B cell (primary cell): ENCODE measurements at regions of chr17 and their contacts with region 1.

Region 1: DNA sequence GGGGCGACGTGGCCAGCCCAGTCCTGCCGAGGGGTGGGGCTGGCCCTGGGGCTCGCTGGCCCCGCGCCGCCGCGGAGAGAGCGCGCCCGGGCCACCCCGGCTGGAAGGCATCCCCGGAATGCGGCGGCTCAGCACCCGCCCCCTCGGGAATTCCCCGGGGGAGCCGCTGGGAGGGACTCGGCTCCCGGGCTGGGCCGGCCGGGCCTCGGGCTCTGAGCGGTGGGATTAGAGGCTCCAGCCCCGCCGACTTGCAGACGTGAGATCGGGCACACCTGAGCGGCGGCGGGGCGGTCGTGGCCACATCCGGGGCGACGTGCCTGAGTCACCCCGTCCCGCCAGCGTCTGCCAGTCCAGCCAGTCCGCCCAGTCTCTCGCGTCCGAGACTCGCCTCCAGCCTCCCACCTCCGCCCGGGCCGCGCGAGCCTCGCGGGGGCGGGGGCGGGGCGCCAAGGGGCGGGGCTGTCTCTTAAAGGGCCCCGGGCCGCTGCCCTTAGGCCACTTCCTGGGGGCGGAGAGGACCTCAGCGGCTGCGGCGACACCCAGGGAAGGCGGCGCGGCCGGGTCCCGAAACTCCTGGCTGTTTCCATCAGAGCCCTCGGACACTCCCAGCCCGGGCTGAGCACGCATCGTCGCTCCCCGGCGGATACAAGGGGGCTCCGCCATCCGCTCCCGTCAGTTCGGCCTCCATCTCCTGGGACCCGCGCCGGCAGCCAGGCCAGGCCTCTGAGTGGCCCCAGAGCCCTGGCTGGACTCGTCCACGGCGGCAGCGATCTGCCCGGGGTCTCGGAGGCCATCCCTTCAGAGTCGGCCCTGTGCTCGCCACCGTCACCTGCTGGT is at the start of gene KCTD11:
- DNase-seq: peak; percentile 78
- ATAC-seq: peak; percentile 67
- H3K4me3 ChIP-seq: peak within 1 kb of the TSS; percentile 35 to 92 (median 84)
- H3K4me3 Mint-ChIP-seq: peak within 1 kb of the TSS; percentile 94
- H3K27ac ChIP-seq: peak within 1 kb of the TSS; percentile 63 to 90
- H3K27ac Mint-ChIP-seq: peak within 1 kb of the TSS; percentile 91
- H3K4me1 ChIP-seq: peaks cover 14 to 41% of the 10 kb centered on the region in 2 donors
- H3K4me1 Mint-ChIP-seq: peaks cover 38% of the 10 kb centered on the region
- H3K27me3 ChIP-seq: no peaks in the 10 kb centered on the region
- H3K27me3 Mint-ChIP-seq: no peaks in the 10 kb centered on the region
- CTCF ChIP-seq: peak; percentile 50
- total RNA-seq, gene KCTD11: 13.4 and 15.4 TPM in 2 replicates

Region 2: GRCh38 chr17:7204828-7205461 is 146.9 kb before region 1 on chr17:
- CTCF ChIA-PET with region 1: no interaction called
- POLR2A ChIA-PET with region 1: no interaction called
- intact Hi-C with region 1: no loop called
- DNase-seq: peak; percentile 99
- ATAC-seq: peak; percentile 85
- H3K4me3 ChIP-seq: peak overlapping the region in 4 of 5 experiments; percentile 49 to 65 (median 55)
- H3K4me3 Mint-ChIP-seq: peak overlapping the region; percentile 82
- H3K27ac ChIP-seq: peak overlapping the region; percentile 86 to 93
- H3K27ac Mint-ChIP-seq: peak overlapping the region; percentile 91
- H3K4me1 ChIP-seq: peaks cover 17 to 25% of the 10 kb centered on the region in 2 donors
- H3K4me1 Mint-ChIP-seq: peaks cover 28% of the 10 kb centered on the region
- H3K27me3 ChIP-seq: no peaks in the 10 kb centered on the region
- H3K27me3 Mint-ChIP-seq: peaks cover under 1% of the 10 kb centered on the region
- CTCF ChIP-seq: no peak

Region 3: DNA sequence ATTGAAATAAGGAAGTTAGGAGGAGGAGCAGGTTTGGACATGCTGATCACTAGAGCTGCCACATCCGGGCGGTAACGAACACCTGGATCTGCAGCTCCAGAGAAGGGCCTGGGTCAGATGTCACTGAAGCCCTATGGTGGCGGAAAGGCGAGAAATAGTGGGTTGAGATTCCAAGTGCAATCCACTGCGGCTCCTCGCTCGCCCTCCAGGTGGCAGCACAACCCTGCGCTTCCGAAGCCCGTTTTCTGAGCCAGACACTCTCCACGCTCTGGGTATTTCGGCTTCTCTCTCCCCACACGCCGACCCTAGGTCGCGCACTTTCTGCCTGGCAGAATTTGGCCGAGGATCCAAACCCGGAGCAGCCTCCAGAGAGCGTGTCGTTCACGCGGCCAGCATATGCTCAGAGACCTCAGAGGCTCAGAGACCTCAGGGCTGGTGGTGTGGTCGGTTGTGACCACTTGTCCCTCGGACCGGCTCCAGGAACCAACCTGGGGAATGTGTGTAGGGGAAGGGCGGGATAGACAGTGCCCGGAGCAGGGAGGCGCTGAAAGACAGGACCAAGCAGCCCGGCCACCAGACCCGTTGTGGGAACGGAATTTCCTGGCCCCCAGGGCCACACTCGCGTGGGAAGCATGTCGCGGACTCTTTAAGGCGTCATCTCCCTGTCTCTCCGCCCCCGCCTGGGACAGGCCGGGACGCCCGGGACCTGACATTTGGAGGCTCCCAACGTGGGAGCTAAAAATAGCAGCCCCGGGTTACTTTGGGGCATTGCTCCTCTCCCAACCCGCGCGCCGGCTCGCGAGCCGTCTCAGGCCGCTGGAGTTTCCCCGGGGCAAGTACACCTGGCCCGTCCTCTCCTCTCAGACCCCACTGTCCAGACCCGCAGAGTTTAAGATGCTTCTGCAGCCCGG is 71.1 kb before region 1 on chr17:
- CTCF ChIA-PET with region 1: interaction called, 42 read pairs
- POLR2A ChIA-PET with region 1: interaction called, 10 read pairs
- intact Hi-C with region 1: no loop called
- DNase-seq: peak; percentile 85
- ATAC-seq: peak; percentile 84
- H3K4me3 ChIP-seq: peak overlapping the region; percentile 2 to 69 (median 53)
- H3K4me3 Mint-ChIP-seq: peak overlapping the region; percentile 92
- H3K27ac ChIP-seq: no peak overlapping the region
- H3K27ac Mint-ChIP-seq: peak overlapping the region; percentile 76
- H3K4me1 ChIP-seq: peaks cover 20 to 31% of the 10 kb centered on the region in 2 donors
- H3K4me1 Mint-ChIP-seq: peaks cover 20% of the 10 kb centered on the region
- H3K27me3 ChIP-seq: peaks cover 0 to 46% (median 13%) of the 10 kb centered on the region in 4 experiments
- H3K27me3 Mint-ChIP-seq: peaks cover 18% of the 10 kb centered on the region
- CTCF ChIP-seq: peak; percentile 91

Region 4: GRCh38 chr17:7314719-7315569 is 36.9 kb before region 1 on chr17 and contains the start of gene GPS2:
- CTCF ChIA-PET with region 1: interaction called, 5 read pairs
- POLR2A ChIA-PET with region 1: interaction called, 3 read pairs
- intact Hi-C with region 1: loop called (anchors 2 kb)
- DNase-seq: peak; percentile 95
- ATAC-seq: peak; percentile 82
- H3K4me3 ChIP-seq: peak within 1 kb of the TSS; percentile 73 to 90 (median 82)
- H3K4me3 Mint-ChIP-seq: peak within 1 kb of the TSS; percentile 97
- H3K27ac ChIP-seq: peak within 1 kb of the TSS; percentile 78 to 91
- H3K27ac Mint-ChIP-seq: peak within 1 kb of the TSS; percentile 99
- H3K4me1 ChIP-seq: peaks cover 25 to 47% of the 10 kb centered on the region in 2 donors
- H3K4me1 Mint-ChIP-seq: peaks cover 55% of the 10 kb centered on the region
- H3K27me3 ChIP-seq: no peaks in the 10 kb centered on the region
- H3K27me3 Mint-ChIP-seq: no peaks in the 10 kb centered on the region
- CTCF ChIP-seq: no peak
- total RNA-seq, gene GPS2: 128 and 137 TPM in 2 replicates

Region 5: DNA sequence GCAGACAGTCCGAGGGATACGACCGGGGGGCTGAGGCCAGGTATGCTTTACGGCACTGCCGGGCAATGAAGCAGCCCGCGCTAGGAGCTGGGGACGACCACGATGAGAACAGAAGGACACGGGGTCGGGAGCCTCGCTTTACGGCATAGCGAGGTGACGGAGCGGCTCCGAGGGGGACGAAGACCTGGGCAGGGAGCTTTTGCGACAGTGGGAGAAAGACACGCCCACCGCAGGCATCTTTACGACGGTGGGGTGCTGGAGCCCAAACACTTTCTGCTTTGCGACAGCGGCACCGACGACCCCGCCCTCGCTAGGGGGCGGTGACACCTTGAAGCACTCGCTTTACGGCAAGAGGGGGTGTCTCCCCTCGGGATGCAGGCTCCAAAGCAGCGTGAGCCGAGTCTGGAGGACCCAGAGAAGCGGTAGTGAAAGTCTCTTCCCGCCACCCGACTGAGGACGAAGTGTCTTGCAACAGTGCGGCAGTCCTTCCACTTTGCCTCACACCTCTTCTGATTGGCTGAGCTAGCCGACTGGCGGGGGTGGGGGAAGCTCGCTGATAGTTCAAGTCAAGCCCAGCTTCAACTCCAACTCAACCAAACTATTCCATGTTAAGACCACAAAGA is 22.4 kb before region 1 on chr17:
- CTCF ChIA-PET with region 1: interaction called, 53 read pairs
- POLR2A ChIA-PET with region 1: interaction called, 17 read pairs
- intact Hi-C with region 1: loop called (anchors 1 kb)
- DNase-seq: peak; percentile 100
- ATAC-seq: peak; percentile 71
- H3K4me3 ChIP-seq: peak overlapping the region; percentile 65 to 92 (median 81)
- H3K4me3 Mint-ChIP-seq: peak overlapping the region; percentile 96
- H3K27ac ChIP-seq: peak overlapping the region; percentile 86 to 93
- H3K27ac Mint-ChIP-seq: peak overlapping the region; percentile 98
- H3K4me1 ChIP-seq: peaks cover 23 to 46% of the 10 kb centered on the region in 2 donors
- H3K4me1 Mint-ChIP-seq: peaks cover 40% of the 10 kb centered on the region
- H3K27me3 ChIP-seq: no peaks in the 10 kb centered on the region
- H3K27me3 Mint-ChIP-seq: no peaks in the 10 kb centered on the region
- CTCF ChIP-seq: no peak

Region 6: DNA sequence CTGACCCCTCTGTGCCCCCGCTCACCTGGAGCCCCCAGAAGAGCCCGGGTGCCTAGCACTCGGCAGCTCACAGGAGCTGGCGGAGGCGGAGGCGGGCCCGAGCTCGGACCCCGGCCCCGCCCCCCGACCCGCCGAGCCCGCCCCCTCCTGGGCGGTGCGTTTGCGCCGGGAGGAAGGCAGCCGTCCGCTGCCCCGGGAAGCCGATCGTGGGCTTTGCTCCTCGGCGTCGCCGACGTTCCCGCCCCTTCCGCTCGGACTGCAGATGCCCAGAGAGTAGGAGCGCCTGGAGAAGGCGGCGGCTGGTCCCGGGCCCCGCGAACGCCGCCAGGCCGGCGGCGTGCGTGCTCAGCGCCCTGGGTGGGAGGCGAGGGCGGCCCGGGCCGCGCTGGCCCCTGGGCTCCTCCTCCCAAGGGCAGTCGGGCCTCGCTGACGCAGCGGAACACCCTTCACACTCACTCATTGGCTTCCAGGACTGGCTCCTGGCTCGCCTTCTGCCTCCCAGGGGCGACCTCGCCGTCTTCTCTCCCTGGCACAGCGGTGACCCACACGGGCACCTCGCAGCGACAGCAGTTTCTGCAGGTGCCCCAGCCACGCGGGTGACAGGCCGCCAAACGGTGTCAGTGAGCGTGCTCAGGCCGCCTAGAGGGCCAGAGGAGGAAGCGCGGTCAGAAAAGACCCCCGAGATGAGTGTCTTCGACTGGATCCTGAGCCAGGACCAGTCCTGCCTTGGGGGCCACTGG is 42.7 kb after region 1 on chr17 and contains the start of gene PLSCR3:
- CTCF ChIA-PET with region 1: interaction called, 13 read pairs
- POLR2A ChIA-PET with region 1: no interaction called
- intact Hi-C with region 1: loop called (anchors 1 kb)
- DNase-seq: peak; percentile 90
- ATAC-seq: peak; percentile 89
- H3K4me3 ChIP-seq: peak within 1 kb of the TSS; percentile 31 to 84 (median 81)
- H3K4me3 Mint-ChIP-seq: peak within 1 kb of the TSS; percentile 96
- H3K27ac ChIP-seq: peak within 1 kb of the TSS; percentile 55 to 83
- H3K27ac Mint-ChIP-seq: peak within 1 kb of the TSS; percentile 95
- H3K4me1 ChIP-seq: peaks cover 12 to 16% of the 10 kb centered on the region in 2 donors
- H3K4me1 Mint-ChIP-seq: peaks cover 12% of the 10 kb centered on the region
- H3K27me3 ChIP-seq: no peaks in the 10 kb centered on the region
- H3K27me3 Mint-ChIP-seq: no peaks in the 10 kb centered on the region
- CTCF ChIP-seq: peak; percentile 20
- total RNA-seq, gene PLSCR3: 31.1 and 31.6 TPM in 2 replicates

Region 7: GRCh38 chr17:7484067-7484918 is 132.4 kb after region 1 on chr17 and contains the start of gene POLR2A:
- CTCF ChIA-PET with region 1: interaction called, 7 read pairs
- POLR2A ChIA-PET with region 1: interaction called, 9 read pairs
- intact Hi-C with region 1: loop called (anchors 1 kb)
- DNase-seq: peak; percentile 99
- ATAC-seq: peak; percentile 63
- H3K4me3 ChIP-seq: peak within 1 kb of the TSS; percentile 80 to 100 (median 97)
- H3K4me3 Mint-ChIP-seq: peak within 1 kb of the TSS; percentile 99
- H3K27ac ChIP-seq: peak within 1 kb of the TSS; percentile 100
- H3K27ac Mint-ChIP-seq: peak within 1 kb of the TSS; percentile 100
- H3K4me1 ChIP-seq: peaks cover 29 to 53% of the 10 kb centered on the region in 2 donors
- H3K4me1 Mint-ChIP-seq: peaks cover 71% of the 10 kb centered on the region
- H3K27me3 ChIP-seq: no peaks in the 10 kb centered on the region
- H3K27me3 Mint-ChIP-seq: no peaks in the 10 kb centered on the region
- CTCF ChIP-seq: no peak
- total RNA-seq, gene POLR2A: 225 and 240 TPM in 2 replicates

Region 8: GRCh38 chr17:7561028-7561575 is 209.2 kb after region 1 on chr17:
- CTCF ChIA-PET with region 1: interaction called, 39 read pairs
- POLR2A ChIA-PET with region 1: interaction called, 3 read pairs
- intact Hi-C with region 1: loop called (anchors 1 kb)
- DNase-seq: peak; percentile 89
- ATAC-seq: peak; percentile 64
- H3K4me3 ChIP-seq: peak overlapping the region; percentile 53 to 95 (median 81)
- H3K4me3 Mint-ChIP-seq: peak overlapping the region; percentile 97
- H3K27ac ChIP-seq: peak overlapping the region; percentile 97
- H3K27ac Mint-ChIP-seq: peak overlapping the region; percentile 98
- H3K4me1 ChIP-seq: peaks cover 41 to 61% of the 10 kb centered on the region in 2 donors
- H3K4me1 Mint-ChIP-seq: peaks cover 53% of the 10 kb centered on the region
- H3K27me3 ChIP-seq: no peaks in the 10 kb centered on the region
- H3K27me3 Mint-ChIP-seq: no peaks in the 10 kb centered on the region
- CTCF ChIP-seq: peak; percentile 80

Region 9: DNA sequence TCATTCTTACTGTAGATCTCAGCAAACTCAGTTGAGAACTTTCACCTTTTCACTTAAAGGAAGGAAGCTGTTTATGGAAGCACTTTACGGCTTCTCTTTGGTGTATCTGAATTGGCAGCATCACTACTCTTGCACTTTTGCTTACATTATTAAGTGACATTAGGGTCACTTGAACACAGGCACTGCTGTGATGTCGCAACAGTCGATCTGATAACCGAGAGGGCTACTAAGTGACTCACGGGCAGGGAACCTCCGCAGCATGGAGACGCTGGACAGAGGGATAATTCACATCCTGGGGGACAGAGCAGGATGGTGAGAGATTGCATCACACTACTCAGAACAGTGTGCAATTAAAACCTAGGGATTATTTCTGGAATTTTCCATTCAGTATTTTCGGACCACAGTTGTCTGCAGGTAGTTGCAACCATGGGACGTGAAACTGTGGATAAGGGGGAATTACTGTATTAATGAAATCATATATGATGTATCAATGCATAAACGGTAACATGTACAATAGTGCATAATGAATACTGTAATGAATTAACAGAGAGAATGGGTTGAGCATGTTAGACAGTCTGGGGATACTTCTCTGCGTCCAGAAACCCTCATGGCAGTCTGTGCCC is 422.3 kb after region 1 on chr17:
- CTCF ChIA-PET with region 1: no interaction called
- POLR2A ChIA-PET with region 1: no interaction called
- intact Hi-C with region 1: no loop called
- DNase-seq: no peak
- ATAC-seq: no peak
- H3K4me3 ChIP-seq: no peak overlapping the region
- H3K4me3 Mint-ChIP-seq: no peak overlapping the region
- H3K27ac ChIP-seq: no peak overlapping the region
- H3K27ac Mint-ChIP-seq: no peak overlapping the region
- H3K4me1 ChIP-seq: no peaks in the 10 kb centered on the region
- H3K4me1 Mint-ChIP-seq: no peaks in the 10 kb centered on the region
- H3K27me3 ChIP-seq: peaks cover 0 to 21% (median 4%) of the 10 kb centered on the region in 4 experiments
- H3K27me3 Mint-ChIP-seq: peaks cover 50% of the 10 kb centered on the region
- CTCF ChIP-seq: no peak